Vagina (tissue), 2 donors: ENCODE measurements at regions of chr1 and their contacts with region 1.

Region 1: GRCh38 chr1:77533660-77534305 is 148.7 kb downstream of the ZZZ3 start:
- DNase-seq: no peak
- H3K4me3 ChIP-seq: no peak overlapping the region
- H3K27ac ChIP-seq: no peak overlapping the region
- H3K4me1 ChIP-seq: no peaks in the 10 kb centered on the region
- H3K27me3 ChIP-seq: no peaks in the 10 kb centered on the region
- CTCF ChIP-seq: peak; percentile 55 to 82 (median 65)
- POLR2A ChIP-seq: no peak

Region 2: DNA sequence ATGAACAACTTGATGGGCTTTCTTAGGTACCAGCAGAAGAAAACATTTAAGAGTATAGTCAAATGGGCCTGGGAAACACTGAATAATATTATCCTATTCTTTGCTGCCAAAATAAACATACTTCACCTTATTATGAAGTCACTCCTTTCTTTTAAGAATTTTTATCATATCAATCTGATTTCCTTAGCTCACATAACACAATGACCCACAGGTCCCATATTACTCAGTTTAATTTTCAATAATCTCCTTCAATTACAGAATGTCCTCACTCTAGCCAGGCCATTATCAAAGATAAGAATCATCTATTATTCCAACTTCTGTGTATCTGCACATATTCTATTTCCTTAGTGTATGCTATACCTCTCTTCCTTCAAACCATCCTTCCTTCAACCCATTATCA is 377.6 kb before region 1 on chr1:
- intact Hi-C with region 1: loop called (anchors 10 kb)
- DNase-seq: no peak
- H3K4me3 ChIP-seq: no peak overlapping the region
- H3K27ac ChIP-seq: no peak overlapping the region
- H3K4me1 ChIP-seq: no peaks in the 10 kb centered on the region
- H3K27me3 ChIP-seq: no peaks in the 10 kb centered on the region
- CTCF ChIP-seq: no peak
- POLR2A ChIP-seq: no peak

Region 3: DNA sequence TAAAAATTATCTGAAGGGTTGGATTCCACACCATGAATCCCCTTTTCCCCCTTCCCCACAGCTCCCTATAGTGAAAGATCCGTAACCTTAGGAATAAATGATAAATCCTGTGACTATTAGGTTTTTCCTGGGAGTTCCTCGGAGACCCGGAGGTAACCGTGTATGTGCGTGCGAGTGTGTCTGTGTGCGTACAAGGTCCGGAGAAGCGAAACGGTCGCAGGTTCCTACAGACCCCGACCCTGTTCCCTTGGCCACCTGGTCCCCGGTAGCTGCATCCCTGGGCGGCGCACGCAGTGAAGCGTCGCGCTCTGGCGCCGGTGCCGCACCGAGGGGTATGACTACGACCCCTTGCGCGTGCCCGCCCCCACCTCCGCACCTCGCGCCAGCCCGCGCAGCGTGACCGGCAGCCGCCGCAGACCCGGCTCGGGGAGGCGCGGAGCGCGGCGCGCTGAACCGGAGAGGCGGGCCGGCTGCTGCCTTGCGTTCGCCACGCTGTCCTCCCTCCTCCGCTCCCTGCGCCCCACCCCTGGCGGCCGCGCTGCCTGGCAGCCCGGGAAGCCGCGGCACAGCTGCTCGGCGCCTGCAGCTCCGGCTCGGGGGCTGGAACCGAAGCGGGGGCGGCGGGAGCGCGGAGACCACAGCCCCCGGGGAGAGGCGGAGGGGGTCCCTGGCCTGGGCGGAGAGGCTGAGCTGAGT is 252.1 kb before region 1 on chr1 and contains the start of gene AK5:
- intact Hi-C with region 1: no loop called
- DNase-seq: no peak
- H3K4me3 ChIP-seq: peak within 1 kb of the TSS; percentile 38 to 50
- H3K27ac ChIP-seq: no peak within 1 kb of the TSS
- H3K4me1 ChIP-seq: peaks cover 12% of the 10 kb centered on the region
- H3K27me3 ChIP-seq: no peaks in the 10 kb centered on the region
- CTCF ChIP-seq: no peak
- POLR2A ChIP-seq: no peak
- total RNA-seq, gene AK5: 6.9 TPM